SK-N-SH (cell line): ENCODE measurements at regions of chr5 and their contacts with region 1.

Region 1: GRCh38 chr5:112419986-112420864 is 1.1 kb upstream of the EPB41L4A start:
- DNase-seq: peak; percentile 88
- H3K4me3 ChIP-seq: peak overlapping the region; percentile 61 to 65
- H3K27ac ChIP-seq: peak overlapping the region in 1 of 2 experiments; percentile 47; a peak in 1 of 4 replicates
- H3K4me1 ChIP-seq: peaks cover 0 to 5% of the 10 kb centered on the region in 2 experiments; a peak in 2 of 4 replicates
- H3K27me3 ChIP-seq: peaks cover 27% of the 10 kb centered on the region
- CTCF ChIP-seq: peak; percentile 77
- EP300 ChIP-seq: no peak
- RAD21 ChIP-seq: peak; percentile 91

Region 2: GRCh38 chr5:112160652-112161391 is 259.4 kb before region 1 on chr5:
- CTCF ChIA-PET with region 1: interaction called, 34 read pairs
- POLR2A ChIA-PET with region 1: interaction called, 10 read pairs
- DNase-seq: peak; percentile 92
- H3K4me3 ChIP-seq: peak overlapping the region; percentile 86 to 97
- H3K27ac ChIP-seq: peak overlapping the region; percentile 66 to 81; a peak in 3 of 4 replicates
- H3K4me1 ChIP-seq: peaks cover 0 to 9% of the 10 kb centered on the region in 2 experiments; a peak in 3 of 4 replicates
- H3K27me3 ChIP-seq: no peaks in the 10 kb centered on the region
- CTCF ChIP-seq: peak; percentile 96
- EP300 ChIP-seq: peak in 1 of 2 experiments; percentile 78; a peak in 1 of 4 replicates
- RAD21 ChIP-seq: 0 out of 2 replicates have a peak, but pooled peaks have one; percentile 28

Region 3: GRCh38 chr5:112186401-112186990 is 233.7 kb before region 1 on chr5:
- CTCF ChIA-PET with region 1: interaction called, 16 read pairs
- POLR2A ChIA-PET with region 1: no interaction called
- DNase-seq: peak; percentile 44
- H3K4me3 ChIP-seq: no peak overlapping the region; a peak in 1 of 4 replicates
- H3K27ac ChIP-seq: no peak overlapping the region
- H3K4me1 ChIP-seq: no peaks in the 10 kb centered on the region; a peak in 1 of 4 replicates
- H3K27me3 ChIP-seq: 0 out of 2 replicates have a peak, but pooled peaks cover 4% of the 10 kb centered on the region
- CTCF ChIP-seq: peak; percentile 73
- EP300 ChIP-seq: no peak
- RAD21 ChIP-seq: peak; percentile 53

Region 4: GRCh38 chr5:112210430-112211005 is 209.7 kb before region 1 on chr5:
- CTCF ChIA-PET with region 1: interaction called, 32 read pairs
- POLR2A ChIA-PET with region 1: no interaction called
- DNase-seq: peak; percentile 52
- H3K4me3 ChIP-seq: no peak overlapping the region; a peak in 1 of 4 replicates
- H3K27ac ChIP-seq: no peak overlapping the region
- H3K4me1 ChIP-seq: no peaks in the 10 kb centered on the region
- H3K27me3 ChIP-seq: no peaks in the 10 kb centered on the region; the same call in none of the 2 replicates
- CTCF ChIP-seq: peak; percentile 72
- EP300 ChIP-seq: no peak
- RAD21 ChIP-seq: peak; percentile 75

Region 5: GRCh38 chr5:112248623-112249022 is 171.6 kb before region 1 on chr5:
- CTCF ChIA-PET with region 1: interaction called, 13 read pairs
- POLR2A ChIA-PET with region 1: no interaction called
- DNase-seq: no peak
- H3K4me3 ChIP-seq: no peak overlapping the region
- H3K27ac ChIP-seq: no peak overlapping the region
- H3K4me1 ChIP-seq: no peaks in the 10 kb centered on the region
- H3K27me3 ChIP-seq: no peaks in the 10 kb centered on the region
- CTCF ChIP-seq: no peak
- EP300 ChIP-seq: no peak
- RAD21 ChIP-seq: no peak

Region 6: GRCh38 chr5:112366987-112367386 is 53.2 kb before region 1 on chr5:
- CTCF ChIA-PET with region 1: interaction called, 15 read pairs
- POLR2A ChIA-PET with region 1: no interaction called
- DNase-seq: peak; percentile 27
- H3K4me3 ChIP-seq: no peak overlapping the region
- H3K27ac ChIP-seq: no peak overlapping the region
- H3K4me1 ChIP-seq: no peaks in the 10 kb centered on the region
- H3K27me3 ChIP-seq: no peaks in the 10 kb centered on the region
- CTCF ChIP-seq: peak; percentile 20; the same call in 1 of the 2 replicates
- EP300 ChIP-seq: no peak
- RAD21 ChIP-seq: 0 out of 2 replicates have a peak, but pooled peaks have one; percentile 3

Region 7: DNA sequence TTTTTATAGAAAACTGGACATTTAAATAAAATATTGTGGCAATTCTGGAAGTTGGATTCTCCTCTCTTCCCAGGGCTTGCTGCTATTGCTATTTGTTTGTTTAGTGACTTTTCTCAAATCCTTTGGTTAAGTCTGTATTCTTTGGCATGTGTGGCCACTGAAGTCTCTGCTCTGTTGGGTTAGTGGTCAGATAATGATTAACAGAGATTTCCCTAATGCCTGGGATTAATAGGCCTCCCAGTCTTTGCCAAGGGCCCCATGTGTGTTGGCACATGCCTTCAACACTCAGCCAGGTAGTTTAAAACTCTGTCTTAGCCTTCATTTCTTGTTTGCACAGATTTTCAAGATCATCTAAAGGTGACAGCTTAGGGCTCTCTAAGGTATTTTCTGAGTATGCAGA is 91.7 kb after region 1 on chr5:
- CTCF ChIA-PET with region 1: no interaction called
- POLR2A ChIA-PET with region 1: no interaction called
- DNase-seq: no peak
- H3K4me3 ChIP-seq: no peak overlapping the region
- H3K27ac ChIP-seq: no peak overlapping the region
- H3K4me1 ChIP-seq: no peaks in the 10 kb centered on the region
- H3K27me3 ChIP-seq: no peaks in the 10 kb centered on the region
- CTCF ChIP-seq: no peak
- EP300 ChIP-seq: no peak
- RAD21 ChIP-seq: no peak

Region 8: GRCh38 chr5:112635771-112636731 is 215.8 kb after region 1 on chr5:
- CTCF ChIA-PET with region 1: no interaction called
- POLR2A ChIA-PET with region 1: no interaction called
- DNase-seq: no peak
- H3K4me3 ChIP-seq: no peak overlapping the region
- H3K27ac ChIP-seq: no peak overlapping the region
- H3K4me1 ChIP-seq: peaks cover 0 to 2% of the 10 kb centered on the region in 2 experiments; a peak in 2 of 4 replicates
- H3K27me3 ChIP-seq: no peaks in the 10 kb centered on the region
- CTCF ChIP-seq: no peak
- EP300 ChIP-seq: no peak
- RAD21 ChIP-seq: no peak